Activated naive CD4-positive, alpha-beta T cell treated with anti-CD3 and anti-CD28 coated beads for 36 hours (primary cell): ENCODE measurements at regions of chr1 and their contacts with region 1.

Region 1: GRCh38 chr1:223102797-223103533 is 40.1 kb downstream of the TLR5 start:
- DNase-seq: peak; percentile 10
- H3K4me3 Mint-ChIP-seq: no peak overlapping the region
- H3K27ac Mint-ChIP-seq: no peak overlapping the region
- H3K4me1 Mint-ChIP-seq: peaks cover 3% of the 10 kb centered on the region
- H3K27me3 Mint-ChIP-seq: no peaks in the 10 kb centered on the region

Region 2: DNA sequence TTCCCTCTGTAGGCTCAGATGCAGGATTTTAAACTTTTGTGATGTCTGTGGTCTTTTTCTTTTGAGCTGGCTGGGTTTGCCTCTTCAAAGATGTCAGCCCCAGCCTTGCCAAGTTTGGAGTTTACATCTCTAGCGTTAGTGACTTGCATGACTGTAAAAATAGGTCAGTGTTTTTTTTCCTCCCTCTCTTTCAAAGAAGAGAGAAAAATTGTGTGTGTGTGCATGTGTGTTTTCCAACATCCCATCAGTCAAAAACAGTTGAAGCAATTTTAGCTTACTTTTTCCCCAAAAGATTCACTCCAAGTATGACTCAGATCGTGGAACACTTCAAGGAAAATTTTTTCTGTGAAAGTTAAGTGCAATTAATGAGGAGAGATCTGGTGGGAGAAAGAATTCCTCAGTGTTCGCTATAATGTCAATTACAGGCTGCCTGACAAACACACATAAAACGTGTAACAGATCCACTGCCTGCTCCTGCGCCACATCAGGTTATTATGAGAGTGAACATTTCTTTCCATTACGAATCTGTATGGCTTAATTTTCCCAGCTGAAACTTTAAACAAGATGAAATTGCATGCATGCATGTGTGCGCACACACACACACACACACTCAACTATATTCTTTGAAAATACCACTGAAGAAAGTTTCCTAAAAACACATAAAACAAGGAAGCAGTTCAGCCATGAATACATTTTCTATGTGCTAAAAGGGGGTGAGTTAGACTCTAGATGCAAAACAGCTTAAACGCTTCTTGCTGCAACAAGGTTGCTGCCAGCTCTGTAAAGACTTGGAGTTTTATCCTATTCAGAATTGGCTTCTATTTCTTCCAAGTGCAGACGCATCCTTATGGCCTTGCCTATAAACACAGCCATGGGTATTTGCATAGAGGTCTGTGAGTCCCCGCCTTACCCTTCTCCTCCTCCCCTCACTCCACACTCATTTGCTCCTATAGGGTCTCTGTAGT is 15.4 kb before region 1 on chr1:
- CTCF ChIA-PET with region 1: interaction called, 10 read pairs
- intact Hi-C with region 1: no loop called
- DNase-seq: no peak
- H3K4me3 Mint-ChIP-seq: no peak overlapping the region
- H3K27ac Mint-ChIP-seq: no peak overlapping the region
- H3K4me1 Mint-ChIP-seq: peaks cover 10% of the 10 kb centered on the region
- H3K27me3 Mint-ChIP-seq: no peaks in the 10 kb centered on the region